Left cardiac atrium (tissue), 4 donors: ENCODE measurements at regions of chr6 and their contacts with region 1.

Region 1: GRCh38 chr6:154156135-154156896 is 117.3 kb downstream of the OPRM1 start:
- DNase-seq: no peak
- ATAC-seq: peak; percentile 70 to 78

Region 2: DNA sequence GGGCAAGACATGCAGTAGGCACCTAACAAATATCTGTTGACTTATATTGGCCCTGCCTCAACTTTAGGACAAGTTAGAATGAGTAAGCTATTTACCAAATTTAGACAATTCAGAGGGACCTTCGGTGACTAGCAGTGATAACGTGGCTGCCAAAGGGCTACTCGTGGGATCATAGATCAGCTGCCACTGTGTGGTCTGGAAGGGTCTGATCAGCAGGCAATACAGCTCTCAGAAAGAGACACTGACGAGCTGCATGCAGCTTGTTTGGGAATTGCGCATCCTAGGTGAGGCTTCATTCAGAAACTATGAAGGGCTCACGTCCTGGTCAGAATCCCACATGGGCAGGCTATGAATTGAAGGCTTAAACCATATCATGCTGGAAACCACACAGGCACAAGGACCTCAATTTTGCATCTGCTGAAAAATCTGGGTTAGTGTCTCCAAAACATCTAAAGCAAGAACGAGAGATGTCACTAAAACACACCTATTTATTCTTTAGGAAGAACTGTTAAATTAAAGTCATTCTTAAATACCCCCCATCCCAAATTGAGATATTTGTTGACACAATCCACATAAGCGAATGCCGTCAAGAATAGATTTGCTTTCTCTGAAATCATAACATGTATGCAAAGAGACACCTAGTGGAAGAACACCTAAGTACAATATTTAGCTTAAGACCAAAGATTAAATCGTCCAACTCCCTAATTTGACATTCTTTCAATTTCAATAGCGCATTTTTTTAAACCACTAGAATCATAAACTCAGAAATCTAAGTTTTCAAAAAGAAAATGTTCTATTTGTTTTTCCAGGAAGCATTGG is 120.7 kb after region 1 on chr6:
- intact Hi-C with region 1: loop called (anchors 2 to 5 kb)
- DNase-seq: no peak
- ATAC-seq: peak; percentile 47 to 50

Region 3: GRCh38 chr6:154370545-154370944 is 214.2 kb after region 1 on chr6:
- intact Hi-C with region 1: loop called in 1 of 2 experiments (anchors 5 kb)
- DNase-seq: no peak
- ATAC-seq: peak in 1 of 2 donors; percentile 45

Region 4: GRCh38 chr6:154593122-154593521 is 436.8 kb after region 1 on chr6:
- intact Hi-C with region 1: no loop called
- DNase-seq: peak; percentile 40
- ATAC-seq: peak; percentile 85 to 90